CD4-positive, alpha-beta T cell (primary cell): ENCODE measurements at regions of chr17 and their contacts with region 1.

Region 1: DNA sequence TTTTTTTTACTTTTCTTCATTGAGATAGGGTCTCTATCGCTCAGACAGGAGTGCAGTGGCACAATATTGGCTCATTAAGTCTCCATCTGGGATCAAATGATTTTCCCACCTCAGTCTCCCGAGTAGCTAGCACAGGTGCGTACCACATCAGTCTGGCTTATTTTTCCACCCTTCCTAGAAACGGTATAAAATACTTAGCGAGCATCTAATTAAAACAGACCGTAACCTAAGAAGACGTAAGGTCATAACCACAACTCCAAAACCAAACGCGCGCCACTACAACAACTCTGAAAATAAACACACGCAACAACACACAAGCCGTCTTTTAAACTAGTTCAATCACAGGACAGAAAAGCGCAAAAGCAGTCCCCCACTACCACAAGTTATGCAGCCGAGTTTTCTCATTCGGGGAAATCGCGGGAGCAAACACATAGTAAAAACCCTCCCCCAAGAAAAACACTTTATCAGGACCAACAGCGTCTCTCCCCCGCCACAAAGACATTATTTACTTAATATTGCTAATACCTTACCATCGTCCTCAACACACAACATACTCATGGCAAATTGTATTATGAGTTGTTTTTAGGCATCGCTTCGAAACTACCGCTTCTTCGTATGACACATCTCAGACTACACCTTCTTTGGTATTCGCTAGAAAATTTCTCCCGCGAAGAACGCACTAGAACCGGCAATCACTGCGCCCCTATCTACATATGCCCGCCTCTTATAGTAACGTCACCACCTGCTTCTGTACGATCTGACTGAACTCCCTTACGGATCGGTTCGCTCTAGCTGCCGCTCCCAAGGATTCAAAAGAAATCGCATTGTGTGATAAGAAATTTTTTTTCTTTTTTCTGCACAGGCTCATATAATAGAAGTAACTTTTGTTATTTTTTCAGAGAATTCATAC is 32.8 kb downstream of the TEX14 start:
- DNase-seq: peak; percentile 48 to 93 (median 66)
- ATAC-seq: peak; percentile 85
- H3K4me3 ChIP-seq: peak overlapping the region; percentile 58
- H3K4me3 Mint-ChIP-seq: peak overlapping the region; percentile 85
- H3K27ac ChIP-seq: peak overlapping the region; percentile 79 to 96
- H3K27ac Mint-ChIP-seq: peak overlapping the region; percentile 97
- H3K4me1 ChIP-seq: peaks cover 12% of the 10 kb centered on the region
- H3K4me1 Mint-ChIP-seq: peaks cover 15% of the 10 kb centered on the region
- H3K27me3 ChIP-seq: no peaks in the 10 kb centered on the region
- H3K27me3 Mint-ChIP-seq: peaks cover 5% of the 10 kb centered on the region
- CTCF ChIP-seq: no peak

Region 2: GRCh38 chr17:58587702-58588254 is 71.3 kb before region 1 on chr17:
- CTCF ChIA-PET with region 1: interaction called, 3 read pairs
- POLR2A ChIA-PET with region 1: no interaction called
- intact Hi-C with region 1: loop called in 1 of 2 experiments (anchors 2 kb)
- DNase-seq: peak; percentile 33 to 81 (median 47)
- ATAC-seq: peak; percentile 92
- H3K4me3 ChIP-seq: no peak overlapping the region
- H3K4me3 Mint-ChIP-seq: no peak overlapping the region
- H3K27ac ChIP-seq: no peak overlapping the region
- H3K27ac Mint-ChIP-seq: no peak overlapping the region
- H3K4me1 ChIP-seq: peaks cover 5% of the 10 kb centered on the region
- H3K4me1 Mint-ChIP-seq: peaks cover 4% of the 10 kb centered on the region
- H3K27me3 ChIP-seq: no peaks in the 10 kb centered on the region
- H3K27me3 Mint-ChIP-seq: peaks cover 8% of the 10 kb centered on the region
- CTCF ChIP-seq: peak; percentile 91

Region 3: GRCh38 chr17:58601976-58602375 is 57.1 kb before region 1 on chr17:
- CTCF ChIA-PET with region 1: no interaction called
- POLR2A ChIA-PET with region 1: no interaction called
- intact Hi-C with region 1: no loop called
- DNase-seq: no peak
- ATAC-seq: no peak
- H3K4me3 ChIP-seq: no peak overlapping the region
- H3K4me3 Mint-ChIP-seq: no peak overlapping the region
- H3K27ac ChIP-seq: no peak overlapping the region
- H3K27ac Mint-ChIP-seq: no peak overlapping the region
- H3K4me1 ChIP-seq: no peaks in the 10 kb centered on the region
- H3K4me1 Mint-ChIP-seq: no peaks in the 10 kb centered on the region
- H3K27me3 ChIP-seq: no peaks in the 10 kb centered on the region
- H3K27me3 Mint-ChIP-seq: no peaks in the 10 kb centered on the region
- CTCF ChIP-seq: no peak

Region 4: DNA sequence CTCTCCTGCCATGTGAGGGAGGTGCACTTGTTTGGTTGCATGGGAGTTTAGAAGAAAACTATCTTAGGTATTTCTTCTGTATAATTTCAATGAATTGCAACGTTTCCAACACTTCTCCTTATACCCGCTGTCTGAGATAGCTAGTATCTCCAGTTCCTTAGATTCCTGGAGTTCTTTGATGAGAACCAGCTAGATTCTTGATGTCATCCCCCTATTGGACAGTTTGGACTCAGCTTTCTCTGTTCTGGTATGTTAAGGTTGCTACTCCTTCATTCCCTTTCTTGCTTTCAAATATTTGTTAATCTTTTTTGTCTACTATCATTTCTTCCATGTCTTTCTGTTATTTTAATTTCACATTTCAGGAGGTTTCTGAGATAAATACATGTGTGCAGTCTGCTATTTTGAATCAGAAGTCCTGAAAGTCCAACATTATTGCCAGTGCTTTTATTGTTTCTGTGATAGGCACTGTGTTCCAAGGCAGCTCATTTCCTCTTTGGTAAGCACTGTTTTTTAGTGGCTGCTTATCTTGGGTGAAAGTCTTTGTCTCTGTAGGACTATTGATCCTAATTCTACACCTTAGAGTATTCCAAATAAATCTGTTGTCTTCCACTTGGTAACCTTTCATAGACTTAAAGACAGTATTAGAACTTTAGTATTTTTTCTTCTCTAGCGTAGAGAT is 172.6 kb after region 1 on chr17:
- CTCF ChIA-PET with region 1: no interaction called
- POLR2A ChIA-PET with region 1: no interaction called
- intact Hi-C with region 1: no loop called
- DNase-seq: no peak
- ATAC-seq: no peak
- H3K4me3 ChIP-seq: no peak overlapping the region
- H3K4me3 Mint-ChIP-seq: no peak overlapping the region
- H3K27ac ChIP-seq: no peak overlapping the region
- H3K27ac Mint-ChIP-seq: no peak overlapping the region
- H3K4me1 ChIP-seq: no peaks in the 10 kb centered on the region
- H3K4me1 Mint-ChIP-seq: no peaks in the 10 kb centered on the region
- H3K27me3 ChIP-seq: peaks cover 6 to 8% of the 10 kb centered on the region in 2 experiments
- H3K27me3 Mint-ChIP-seq: peaks cover 29% of the 10 kb centered on the region
- CTCF ChIP-seq: no peak